Activated naive CD4-positive, alpha-beta T cell treated with anti-CD3 and anti-CD28 coated beads for 36 hours (primary cell): ENCODE measurements at regions of chr5 and their contacts with region 1.

Region 1: GRCh38 chr5:26791433-26791832 is 247.0 kb downstream of the CDH9 start:
- DNase-seq: no peak
- H3K4me3 Mint-ChIP-seq: no peak overlapping the region
- H3K27ac Mint-ChIP-seq: no peak overlapping the region
- H3K4me1 Mint-ChIP-seq: no peaks in the 10 kb centered on the region
- H3K27me3 Mint-ChIP-seq: no peaks in the 10 kb centered on the region

Region 2: DNA sequence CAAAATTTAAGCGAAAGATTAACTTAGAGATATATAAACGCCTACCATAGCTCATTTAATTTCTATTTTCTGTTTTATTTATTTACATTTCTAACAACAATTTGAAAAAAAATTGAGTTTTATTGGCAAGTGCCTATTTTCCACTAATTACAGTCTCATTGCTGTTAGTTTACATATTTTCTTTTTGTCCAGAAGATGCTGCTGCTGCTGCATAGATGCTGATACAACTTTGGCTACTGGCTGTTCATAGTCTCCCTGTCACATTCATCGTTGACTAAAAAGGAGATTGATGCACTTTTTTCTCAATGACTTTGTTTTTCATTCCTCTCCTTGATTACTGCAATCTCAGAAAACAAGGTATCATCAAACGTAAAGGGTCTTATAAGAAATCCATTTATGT is 11.5 kb after region 1 on chr5:
- CTCF ChIA-PET with region 1: no interaction called
- intact Hi-C with region 1: loop called (anchors 1 kb)
- DNase-seq: no peak
- H3K4me3 Mint-ChIP-seq: no peak overlapping the region
- H3K27ac Mint-ChIP-seq: no peak overlapping the region
- H3K4me1 Mint-ChIP-seq: no peaks in the 10 kb centered on the region
- H3K27me3 Mint-ChIP-seq: no peaks in the 10 kb centered on the region

Region 3: GRCh38 chr5:27158775-27159174 is 367.3 kb after region 1 on chr5:
- CTCF ChIA-PET with region 1: no interaction called
- intact Hi-C with region 1: no loop called
- DNase-seq: no peak
- H3K4me3 Mint-ChIP-seq: no peak overlapping the region
- H3K27ac Mint-ChIP-seq: no peak overlapping the region
- H3K4me1 Mint-ChIP-seq: no peaks in the 10 kb centered on the region
- H3K27me3 Mint-ChIP-seq: no peaks in the 10 kb centered on the region